ENCODE measurements at regions of chr16 and their contacts with region 1.

Region 1: DNA sequence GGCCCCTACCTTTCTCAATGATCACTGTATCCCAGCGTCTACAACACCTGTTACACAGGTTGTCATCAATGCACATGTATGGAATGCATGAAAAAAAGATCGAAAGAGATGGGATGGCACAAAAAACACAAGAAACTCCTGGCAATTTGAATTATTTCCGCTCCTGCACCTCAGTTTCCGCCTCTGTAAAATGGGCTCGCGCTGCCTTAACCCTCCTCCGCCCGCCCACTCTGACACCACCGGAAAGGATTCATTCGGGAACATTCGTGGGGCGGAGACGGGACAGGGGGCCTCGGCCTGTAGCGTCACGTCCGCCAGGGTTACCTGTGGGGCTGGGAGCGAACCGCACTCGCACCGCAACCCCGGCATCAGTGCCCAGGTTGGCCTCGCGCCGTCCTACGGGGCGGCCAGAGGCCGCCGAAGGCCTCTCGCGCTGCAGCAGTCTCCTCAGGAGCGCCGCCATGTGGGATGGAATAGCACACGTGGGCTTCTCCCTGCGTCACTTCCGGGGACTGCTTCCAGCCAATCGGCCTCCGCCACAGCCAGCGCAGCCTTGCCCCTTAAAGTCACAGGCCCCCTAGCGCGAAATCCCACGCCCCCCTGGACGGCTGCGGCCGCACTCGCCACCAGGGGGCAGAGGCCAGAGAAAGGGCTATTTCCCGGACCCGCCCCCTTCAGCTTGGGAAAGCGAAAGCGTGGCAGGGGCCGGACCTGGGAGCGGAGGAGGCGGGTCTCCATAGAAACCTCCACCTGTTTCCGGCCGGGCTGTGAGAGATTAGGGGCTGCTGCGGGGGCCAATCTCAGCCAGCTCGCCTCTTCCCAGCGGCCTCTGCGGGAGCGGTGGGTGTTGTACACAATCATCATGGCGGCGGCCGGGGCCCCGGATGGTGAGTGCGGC is at the starts of genes EARS2 and UBFD1:
- DNase-seq: peak; percentile 93
- H3K4me3 ChIP-seq: peak within 1 kb of the TSS; percentile 96
- CTCF ChIP-seq: peak; percentile 92

Region 2: DNA sequence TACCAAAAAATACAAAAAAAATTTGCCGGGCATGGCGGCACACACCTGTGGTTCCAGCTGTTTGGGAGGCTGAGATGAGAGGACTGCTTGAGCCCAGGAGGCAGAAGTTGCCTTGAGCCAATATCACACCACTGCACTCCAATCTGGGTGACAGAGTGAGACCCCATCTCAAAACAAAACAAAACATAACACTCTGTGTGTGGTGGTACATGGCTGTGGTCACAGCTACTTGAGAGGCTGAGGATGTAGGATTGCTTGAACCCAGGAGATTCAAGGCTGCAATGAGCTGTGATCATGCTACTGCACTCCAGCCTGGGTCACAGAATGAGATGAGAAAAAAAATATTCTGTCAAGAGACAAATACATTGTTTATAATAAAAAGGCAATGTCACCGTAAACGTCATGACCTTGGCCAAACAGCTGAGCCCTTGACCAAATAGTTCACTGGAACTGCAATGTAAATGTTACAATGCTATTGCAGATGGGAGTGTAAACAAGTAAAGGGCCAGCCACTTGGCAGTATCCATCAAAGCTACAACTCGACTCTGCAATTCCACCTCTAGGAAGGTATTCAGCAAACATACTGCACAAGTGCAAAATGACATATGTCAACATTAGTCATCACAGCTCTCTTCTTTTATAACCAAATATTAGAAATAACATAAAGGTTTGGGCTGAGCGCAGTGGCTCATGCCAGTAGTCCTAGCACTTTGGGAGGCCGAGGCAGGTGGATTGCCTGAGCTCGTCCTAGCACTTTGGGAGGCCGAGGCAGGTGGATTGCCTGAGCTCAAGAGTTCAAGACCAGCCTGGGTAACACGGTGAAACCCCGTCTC is 16.9 kb before region 1 on chr16:
- CTCF ChIA-PET with region 1: interaction called, 21 read pairs
- POLR2A ChIA-PET with region 1: interaction called, 3 read pairs
- DNase-seq: no peak
- H3K4me3 ChIP-seq: no peak overlapping the region
- CTCF ChIP-seq: no peak

Region 3: GRCh38 chr16:23570992-23571632 is 14.0 kb after region 1 on chr16:
- CTCF ChIA-PET with region 1: interaction called, 10 read pairs
- POLR2A ChIA-PET with region 1: interaction called, 5 read pairs
- DNase-seq: no peak
- H3K4me3 ChIP-seq: no peak overlapping the region
- CTCF ChIP-seq: no peak

Region 4: GRCh38 chr16:23807028-23807427 is 249.9 kb after region 1 on chr16:
- CTCF ChIA-PET with region 1: no interaction called
- POLR2A ChIA-PET with region 1: no interaction called
- DNase-seq: no peak
- H3K4me3 ChIP-seq: no peak overlapping the region
- CTCF ChIP-seq: no peak

Measured in AG04449 (cell line).